HAP-1 (cell line): ENCODE measurements at regions of chr11 and their contacts with region 1.

Region 1: GRCh38 chr11:124644426-124645280 is 22.0 kb downstream of the TBRG1 start:
- DNase-seq: peak; percentile 75 to 77
- H3K4me3 ChIP-seq: no peak overlapping the region
- H3K4me1 ChIP-seq: peaks cover 6% of the 10 kb centered on the region
- H3K27me3 ChIP-seq: no peaks in the 10 kb centered on the region

Region 2: GRCh38 chr11:123429913-123430720 is 1214.5 kb before region 1 on chr11 and contains the start of gene GRAMD1B:
- in situ Hi-C with region 1: loop called (anchors 25 kb)
- DNase-seq: peak; percentile 89 to 91
- H3K4me3 ChIP-seq: peak within 1 kb of the TSS; percentile 68
- H3K4me1 ChIP-seq: peaks cover 28% of the 10 kb centered on the region
- H3K27me3 ChIP-seq: no peaks in the 10 kb centered on the region

Region 3: DNA sequence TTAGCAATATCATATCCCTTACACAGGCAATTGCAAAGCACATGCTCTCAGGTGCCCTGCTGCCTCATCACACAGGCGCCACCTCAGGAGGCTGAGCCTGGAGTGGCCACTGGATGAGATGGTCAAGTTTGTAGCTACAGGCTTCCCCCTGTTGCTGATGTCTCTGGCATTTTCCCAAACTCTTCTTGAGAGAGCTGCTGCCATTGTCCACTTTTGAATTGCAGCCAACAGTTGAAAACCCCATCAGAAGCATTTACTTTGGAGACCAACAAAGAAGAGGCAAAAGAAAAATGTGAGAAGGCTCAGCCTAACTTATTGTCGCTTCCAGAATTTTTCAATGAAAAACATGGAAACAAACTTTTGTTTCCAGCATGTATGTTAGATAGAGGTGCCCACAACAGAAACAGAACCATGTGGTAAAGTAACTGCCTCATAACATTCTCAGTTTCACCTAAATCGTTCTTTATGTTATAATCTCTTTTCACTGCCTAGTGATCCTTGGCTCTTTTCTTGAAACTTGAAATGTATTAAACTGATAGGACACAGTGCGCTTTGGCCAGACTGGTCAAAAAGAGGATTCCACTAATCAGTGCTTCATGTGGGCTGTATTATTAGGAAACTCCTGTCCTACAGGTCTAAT is 151.5 kb before region 1 on chr11:
- in situ Hi-C with region 1: no loop called
- DNase-seq: no peak
- H3K4me3 ChIP-seq: no peak overlapping the region
- H3K4me1 ChIP-seq: no peaks in the 10 kb centered on the region
- H3K27me3 ChIP-seq: no peaks in the 10 kb centered on the region

Region 4: GRCh38 chr11:124837491-124837856 is 192.8 kb after region 1 on chr11:
- in situ Hi-C with region 1: loop called (anchors 10 kb)
- DNase-seq: peak; percentile 49 to 76
- H3K4me3 ChIP-seq: no peak overlapping the region
- H3K4me1 ChIP-seq: peaks cover 24% of the 10 kb centered on the region
- H3K27me3 ChIP-seq: peaks cover 32% of the 10 kb centered on the region

Region 5: GRCh38 chr11:124865921-124866583 is 221.4 kb after region 1 on chr11:
- in situ Hi-C with region 1: loop called (anchors 10 kb)
- DNase-seq: peak in 1 of 2 experiments; percentile 73
- H3K4me3 ChIP-seq: peak overlapping the region; percentile 8
- H3K4me1 ChIP-seq: peaks cover 3% of the 10 kb centered on the region; the same call in 1 of the 2 replicates
- H3K27me3 ChIP-seq: peaks cover 93% of the 10 kb centered on the region

Region 6: GRCh38 chr11:125404776-125405435 is 760.3 kb after region 1 on chr11:
- in situ Hi-C with region 1: loop called (anchors 25 kb)
- DNase-seq: peak; percentile 60 to 88
- H3K4me3 ChIP-seq: no peak overlapping the region
- H3K4me1 ChIP-seq: peaks cover 2% of the 10 kb centered on the region
- H3K27me3 ChIP-seq: no peaks in the 10 kb centered on the region